Dorsolateral prefrontal cortex (tissue), 120 donors: ENCODE measurements at regions of chr3 and their contacts with region 1.

Region 1: GRCh38 chr3:138694287-138695007 is 85.9 kb downstream of the FAIM start:
- DNase-seq: no peak
- H3K4me3 ChIP-seq: no peak overlapping the region
- H3K27ac ChIP-seq: no peak overlapping the region
- H3K27me3 ChIP-seq: no peaks in the 10 kb centered on the region
- CTCF ChIP-seq: no peak

Region 2: DNA sequence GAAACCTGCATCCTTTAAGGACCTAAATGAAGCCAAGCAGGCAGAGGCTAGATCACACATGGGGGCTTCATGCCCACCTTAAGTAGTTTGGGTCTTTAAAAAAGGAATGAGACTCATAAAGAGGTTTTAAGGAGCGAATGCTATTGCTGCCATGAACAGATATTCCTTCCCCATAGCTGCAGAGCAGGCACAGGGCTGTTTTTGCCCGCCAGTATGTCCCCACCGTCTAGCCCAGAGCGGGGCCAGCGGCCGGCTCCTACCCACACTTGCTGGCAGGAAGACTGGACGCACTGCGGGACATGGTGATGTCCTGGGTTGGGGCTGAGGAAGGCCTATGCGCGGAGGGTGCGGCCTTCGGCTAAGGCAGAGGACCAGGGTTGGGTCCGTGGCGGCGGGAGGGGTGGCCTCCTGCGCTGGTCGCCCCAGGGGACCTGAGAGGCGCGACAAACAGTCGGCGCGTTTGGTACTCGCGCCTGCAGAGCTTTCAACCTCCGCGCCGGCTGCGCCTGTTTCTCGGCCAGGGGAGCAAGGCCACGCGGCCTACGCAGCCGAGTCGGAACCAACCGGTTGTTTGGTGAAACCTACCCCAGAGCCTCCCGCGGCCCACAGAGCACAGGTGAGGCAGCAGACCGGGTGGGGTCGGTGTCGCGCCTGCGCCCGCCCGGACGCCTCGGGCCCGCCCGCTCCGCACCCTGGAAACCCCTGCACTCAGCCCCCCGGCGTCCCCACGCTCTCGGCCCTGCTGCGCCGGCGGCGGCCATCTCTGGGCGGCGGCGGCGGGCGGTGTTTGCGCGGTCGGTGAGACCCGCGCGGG is 85.9 kb before region 1 on chr3 and contains the start of gene FAIM:
- intact Hi-C with region 1: loop called in 1 of 2 experiments (anchors 10 kb)
- DNase-seq: peak; percentile 47 to 79 (median 62)
- H3K4me3 ChIP-seq: peak within 1 kb of the TSS; percentile 44 to 91 (median 80)
- H3K27ac ChIP-seq: peak within 1 kb of the TSS; percentile 55 to 99 (median 94)
- H3K27me3 ChIP-seq: no peaks in the 10 kb centered on the region
- CTCF ChIP-seq: peak in 5 of 56 donors; percentile 9 to 26 (median 15)
- total RNA-seq, gene FAIM: 6.4 to 20.4 (median 11.4) TPM